CD14-positive monocyte (primary cell): ENCODE measurements at regions of chr3 and their contacts with region 1.

Region 1: DNA sequence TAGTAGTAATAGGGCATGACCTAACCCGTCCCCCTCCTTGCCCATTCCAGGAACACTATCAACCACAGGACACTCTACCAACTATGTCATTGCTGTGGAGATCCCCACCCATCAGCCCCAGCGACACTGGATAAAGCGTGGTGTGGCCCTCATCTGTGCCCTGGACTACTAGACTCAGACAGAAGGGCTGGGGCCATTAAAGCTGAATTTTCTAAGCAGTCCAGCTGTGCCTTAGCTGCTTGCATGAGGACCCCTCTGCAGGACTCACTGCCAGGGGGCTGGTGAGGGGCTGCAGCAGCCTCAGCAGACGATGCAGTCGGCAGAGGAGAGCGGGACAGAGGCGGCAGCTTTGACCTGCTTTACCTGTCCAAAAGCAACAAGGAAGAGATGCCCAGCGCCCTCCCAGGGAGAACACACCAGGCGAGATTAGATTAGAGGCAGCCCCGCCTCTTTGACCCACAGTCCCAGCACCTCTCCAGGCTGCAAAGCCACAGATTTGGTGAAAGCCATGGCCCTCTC is 44.6 kb downstream of the SEMA3G start:
- DNase-seq: no peak
- H3K4me3 ChIP-seq: no peak overlapping the region
- H3K4me3 Mint-ChIP-seq: no peak overlapping the region
- H3K27ac ChIP-seq: no peak overlapping the region
- H3K27ac Mint-ChIP-seq: peak overlapping the region in 3 of 7 donors; percentile 42 to 64 (median 58)
- H3K4me1 ChIP-seq: no peaks in the 10 kb centered on the region
- H3K4me1 Mint-ChIP-seq: no peaks in the 10 kb centered on the region
- H3K27me3 ChIP-seq: no peaks in the 10 kb centered on the region
- H3K27me3 Mint-ChIP-seq: no peaks in the 10 kb centered on the region
- CTCF ChIP-seq: no peak

Region 2: DNA sequence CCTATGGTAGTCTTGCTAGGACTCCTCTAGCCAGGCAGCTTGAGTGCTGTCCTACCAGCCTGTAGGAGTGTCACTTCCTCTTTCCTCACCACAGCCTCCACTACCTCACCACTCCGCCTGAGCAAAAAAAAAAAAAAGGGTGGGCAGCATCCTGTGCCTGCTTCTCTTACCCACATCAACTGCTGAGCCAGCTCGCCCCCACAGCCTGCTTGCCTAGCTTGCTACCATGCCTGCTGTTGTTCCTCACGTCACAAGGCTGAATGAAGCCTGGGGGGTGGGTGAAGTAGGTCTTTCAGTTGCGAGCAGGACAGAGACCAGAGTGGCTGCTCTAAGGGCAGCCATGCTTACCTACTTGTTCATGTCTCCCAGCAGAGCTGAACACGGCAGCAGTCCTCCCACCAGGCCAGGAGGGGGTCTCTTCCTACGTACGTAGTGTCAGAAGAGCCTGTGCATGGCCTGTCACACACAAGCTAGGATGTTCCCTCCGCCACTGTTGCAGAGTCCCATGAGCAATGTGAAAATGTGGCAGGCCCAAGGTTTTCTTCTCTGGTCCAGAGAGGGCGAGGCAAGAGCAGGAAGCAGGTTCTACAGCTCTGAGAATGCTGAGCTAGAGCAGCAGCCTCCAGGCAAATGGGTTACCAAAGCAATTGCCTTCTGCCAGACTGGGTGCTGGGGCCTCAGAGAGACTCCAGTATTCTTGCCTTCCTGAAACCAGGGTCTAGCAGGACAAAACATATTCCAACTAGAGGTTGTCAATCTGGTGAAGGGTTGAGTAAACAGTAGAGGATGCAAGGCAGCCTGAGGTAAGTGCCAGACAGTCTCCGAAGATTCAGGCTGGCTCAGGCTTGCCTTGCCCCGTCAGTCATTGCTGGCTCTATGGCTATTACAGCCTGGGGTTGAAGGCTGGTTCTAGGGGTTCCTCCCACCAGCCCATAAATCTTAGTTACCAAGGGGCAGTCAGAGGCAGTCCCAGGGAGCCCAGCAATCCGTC is 146.7 kb before region 1 on chr3:
- intact Hi-C with region 1: no loop called
- DNase-seq: peak; percentile 77 to 82 (median 79)
- H3K4me3 ChIP-seq: peak overlapping the region in 1 of 3 experiments; percentile 1
- H3K4me3 Mint-ChIP-seq: peak overlapping the region in 1 of 2 donors; percentile 45
- H3K27ac ChIP-seq: peak overlapping the region; percentile 56 to 70
- H3K27ac Mint-ChIP-seq: peak overlapping the region; percentile 75 to 97 (median 93)
- H3K4me1 ChIP-seq: peaks cover 18 to 21% of the 10 kb centered on the region in 2 donors
- H3K4me1 Mint-ChIP-seq: peaks cover 32% of the 10 kb centered on the region
- H3K27me3 ChIP-seq: no peaks in the 10 kb centered on the region
- H3K27me3 Mint-ChIP-seq: no peaks in the 10 kb centered on the region
- CTCF ChIP-seq: no peak

Region 3: GRCh38 chr3:52420388-52420787 is 20.1 kb after region 1 on chr3:
- intact Hi-C with region 1: loop called in 1 of 2 experiments (anchors 2 kb)
- DNase-seq: no peak
- H3K4me3 ChIP-seq: no peak overlapping the region
- H3K4me3 Mint-ChIP-seq: no peak overlapping the region
- H3K27ac ChIP-seq: no peak overlapping the region
- H3K27ac Mint-ChIP-seq: peak overlapping the region in 2 of 7 donors; percentile 6 to 16
- H3K4me1 ChIP-seq: peaks cover 7 to 8% of the 10 kb centered on the region in 2 donors
- H3K4me1 Mint-ChIP-seq: peaks cover 8% of the 10 kb centered on the region
- H3K27me3 ChIP-seq: no peaks in the 10 kb centered on the region
- H3K27me3 Mint-ChIP-seq: no peaks in the 10 kb centered on the region
- CTCF ChIP-seq: no peak